ENCODE measurements at regions of chr14 and their contacts with region 1.

Region 1: DNA sequence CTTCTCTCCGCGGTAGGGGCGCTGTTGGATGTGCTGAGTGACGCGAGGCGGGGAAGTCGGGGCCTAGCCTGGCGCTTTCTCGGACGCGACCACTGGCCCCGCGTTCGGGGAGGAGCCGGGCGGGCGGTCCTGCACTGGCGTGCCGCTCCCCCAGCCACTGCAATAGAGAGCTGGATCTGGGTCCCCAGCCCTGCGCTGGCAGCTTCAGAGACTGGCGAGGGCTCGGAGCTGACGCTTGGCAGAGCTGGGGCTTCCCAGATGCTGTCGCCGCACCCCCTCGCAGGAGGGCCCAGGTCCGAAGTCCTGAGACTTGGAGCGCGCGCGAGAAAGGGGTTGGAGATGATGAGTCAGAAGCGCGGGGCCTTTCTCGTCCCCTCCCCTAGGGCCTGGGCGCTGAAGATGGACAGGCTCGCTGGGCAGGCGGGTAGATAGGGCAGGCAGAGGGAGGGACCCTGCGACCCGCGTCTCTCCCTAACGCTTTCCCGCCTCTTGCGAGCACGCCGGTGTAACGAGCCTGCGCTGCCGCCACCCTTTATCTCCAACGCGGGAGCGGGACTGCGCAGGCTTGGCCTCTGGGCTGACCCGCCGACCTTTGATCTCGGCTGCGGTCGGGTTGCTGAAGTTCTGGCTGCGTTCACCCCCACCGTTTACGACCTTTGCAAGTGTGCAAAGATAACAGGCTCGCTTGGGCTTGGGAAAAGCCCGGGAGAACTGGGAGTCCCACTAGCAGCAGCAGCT is 3.0 kb downstream of the TMEM253 start:
- DNase-seq: peak; percentile 93
- H3K4me3 Mint-ChIP-seq: peak overlapping the region; percentile 77
- H3K27ac Mint-ChIP-seq: peak overlapping the region; percentile 57
- H3K4me1 Mint-ChIP-seq: peaks cover 56% of the 10 kb centered on the region
- H3K27me3 Mint-ChIP-seq: no peaks in the 10 kb centered on the region
- CTCF ChIP-seq: peak; percentile 68

Region 2: DNA sequence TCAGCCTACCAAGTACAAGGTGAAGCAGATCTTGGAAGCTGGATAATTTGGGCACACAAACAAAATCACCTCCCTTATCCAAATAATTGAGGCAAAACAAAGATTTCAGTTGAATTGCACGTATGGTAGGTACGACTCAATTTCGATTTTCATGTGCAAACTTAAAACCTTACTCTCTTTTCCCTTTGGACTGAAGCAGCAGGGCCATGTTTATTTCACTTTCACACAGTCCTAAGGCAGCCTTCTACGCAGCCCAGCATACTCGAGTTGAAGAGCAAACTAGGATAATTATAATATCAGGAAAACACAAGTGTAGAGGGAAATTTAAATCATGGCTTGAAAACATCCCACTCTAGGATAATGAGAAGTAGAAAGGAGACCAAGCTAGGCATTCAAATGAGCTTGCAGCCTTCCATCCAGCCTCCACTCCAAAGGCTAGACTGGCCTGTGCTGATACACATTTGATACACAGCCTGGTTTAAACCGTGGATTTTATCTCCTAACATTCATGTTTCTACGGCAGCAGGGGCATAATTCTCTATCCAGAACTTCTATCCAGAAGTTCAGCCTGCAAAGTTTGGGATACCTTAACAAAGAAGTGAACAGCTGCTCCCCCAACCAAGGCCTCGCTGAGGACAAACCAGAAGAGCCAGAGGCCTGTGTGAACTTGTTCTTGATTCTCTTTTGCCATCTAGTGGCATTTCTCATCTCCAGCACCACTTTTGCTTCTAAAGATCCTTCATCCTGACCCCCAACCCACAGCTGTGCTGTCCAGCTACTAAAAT is 64.1 kb before region 1 on chr14:
- CTCF ChIA-PET with region 1: interaction called, 6 read pairs
- intact Hi-C with region 1: loop called (anchors 1 kb)
- DNase-seq: peak; percentile 37
- H3K4me3 Mint-ChIP-seq: no peak overlapping the region
- H3K27ac Mint-ChIP-seq: no peak overlapping the region
- H3K4me1 Mint-ChIP-seq: peaks cover 36% of the 10 kb centered on the region
- H3K27me3 Mint-ChIP-seq: peaks cover 70% of the 10 kb centered on the region
- CTCF ChIP-seq: peak; percentile 44

Region 3: DNA sequence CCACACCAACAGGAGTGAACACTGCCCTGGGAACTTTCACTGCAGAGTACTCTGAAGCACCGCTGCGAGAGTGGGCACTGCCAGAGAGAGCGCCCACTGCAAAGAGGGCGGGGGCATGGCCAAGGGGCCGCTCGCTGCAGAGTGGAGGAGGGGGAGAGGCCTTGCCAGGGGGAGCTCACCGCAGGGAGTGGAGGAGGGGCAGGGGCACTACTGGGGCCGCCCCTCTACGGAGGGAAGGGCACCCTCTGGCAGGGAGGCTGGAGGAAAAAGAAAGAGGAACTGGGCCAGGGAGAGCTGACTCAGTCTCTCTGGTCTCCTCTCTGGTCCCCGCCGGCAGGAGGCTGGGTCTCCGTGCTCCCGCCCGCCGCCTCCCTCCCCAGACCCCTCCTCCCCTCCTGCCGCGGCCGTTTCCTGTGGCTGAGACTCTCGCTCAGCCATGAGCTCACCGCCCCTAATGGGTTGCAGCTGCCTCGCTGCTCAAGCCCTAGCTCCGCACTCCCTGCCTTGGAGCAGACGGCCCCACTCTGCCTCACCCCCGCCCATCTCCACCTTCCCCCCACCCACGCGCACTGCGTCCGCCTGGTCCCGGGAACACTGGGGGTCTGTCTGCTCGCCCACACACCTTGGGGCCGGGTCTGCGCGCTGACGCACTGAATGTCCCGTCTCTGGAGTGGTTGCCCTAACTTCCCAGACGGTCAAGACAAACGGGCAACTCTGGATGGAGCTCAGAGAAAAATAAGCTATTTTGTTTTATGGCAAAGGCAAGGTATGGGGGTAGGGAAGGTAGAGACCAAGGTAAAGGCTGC is 32.5 kb before region 1 on chr14:
- CTCF ChIA-PET with region 1: interaction called, 40 read pairs
- intact Hi-C with region 1: loop called (anchors 1 kb)
- DNase-seq: peak; percentile 58
- H3K4me3 Mint-ChIP-seq: peak overlapping the region; percentile 97
- H3K27ac Mint-ChIP-seq: peak overlapping the region; percentile 35
- H3K4me1 Mint-ChIP-seq: peaks cover 8% of the 10 kb centered on the region
- H3K27me3 Mint-ChIP-seq: peaks cover 34% of the 10 kb centered on the region
- CTCF ChIP-seq: no peak

Region 4: DNA sequence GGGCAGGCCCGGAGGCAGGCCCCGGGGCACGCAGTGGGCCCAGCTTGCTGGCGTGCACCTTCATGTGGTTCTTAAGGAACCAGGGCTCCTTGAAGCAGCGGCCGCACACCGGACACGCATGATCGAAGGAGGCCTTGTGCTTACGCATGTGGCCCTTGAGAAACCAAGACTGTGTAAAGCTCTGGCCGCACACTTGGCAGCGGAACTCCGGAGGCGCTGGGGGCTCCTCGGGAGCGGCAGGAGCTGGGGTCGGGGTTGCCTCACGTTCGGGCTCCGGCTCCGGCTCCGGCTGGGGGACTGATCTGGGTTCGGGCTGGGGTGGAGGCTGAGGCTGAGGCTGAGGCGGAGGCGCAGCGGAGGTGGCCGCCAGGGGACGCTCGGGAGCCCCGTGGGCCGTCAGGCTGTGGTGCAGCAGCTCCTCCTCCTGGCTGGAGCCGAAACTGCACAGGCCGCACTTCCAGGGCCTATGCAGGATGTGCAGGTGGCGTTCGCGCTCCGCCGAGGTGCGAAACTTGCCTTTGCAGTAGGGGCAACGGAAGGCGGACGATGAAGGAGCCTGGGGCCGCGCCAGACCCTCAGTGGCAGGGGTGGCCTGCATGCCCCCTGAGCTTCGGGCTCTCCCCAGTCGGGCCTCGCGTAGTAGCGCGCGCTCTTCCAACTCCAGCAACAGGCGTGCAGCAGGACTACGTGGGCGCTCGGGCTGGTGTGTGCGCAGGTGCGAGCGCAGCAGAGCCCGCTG is 11.4 kb before region 1 on chr14:
- CTCF ChIA-PET with region 1: interaction called, 10 read pairs
- intact Hi-C with region 1: no loop called
- DNase-seq: peak; percentile 90
- H3K4me3 Mint-ChIP-seq: peak overlapping the region; percentile 24
- H3K27ac Mint-ChIP-seq: peak overlapping the region; percentile 3
- H3K4me1 Mint-ChIP-seq: peaks cover 8% of the 10 kb centered on the region
- H3K27me3 Mint-ChIP-seq: no peaks in the 10 kb centered on the region
- CTCF ChIP-seq: peak; percentile 99